HepG2 (cell line): ENCODE measurements at regions of chr17 and their contacts with region 1.

Region 1: DNA sequence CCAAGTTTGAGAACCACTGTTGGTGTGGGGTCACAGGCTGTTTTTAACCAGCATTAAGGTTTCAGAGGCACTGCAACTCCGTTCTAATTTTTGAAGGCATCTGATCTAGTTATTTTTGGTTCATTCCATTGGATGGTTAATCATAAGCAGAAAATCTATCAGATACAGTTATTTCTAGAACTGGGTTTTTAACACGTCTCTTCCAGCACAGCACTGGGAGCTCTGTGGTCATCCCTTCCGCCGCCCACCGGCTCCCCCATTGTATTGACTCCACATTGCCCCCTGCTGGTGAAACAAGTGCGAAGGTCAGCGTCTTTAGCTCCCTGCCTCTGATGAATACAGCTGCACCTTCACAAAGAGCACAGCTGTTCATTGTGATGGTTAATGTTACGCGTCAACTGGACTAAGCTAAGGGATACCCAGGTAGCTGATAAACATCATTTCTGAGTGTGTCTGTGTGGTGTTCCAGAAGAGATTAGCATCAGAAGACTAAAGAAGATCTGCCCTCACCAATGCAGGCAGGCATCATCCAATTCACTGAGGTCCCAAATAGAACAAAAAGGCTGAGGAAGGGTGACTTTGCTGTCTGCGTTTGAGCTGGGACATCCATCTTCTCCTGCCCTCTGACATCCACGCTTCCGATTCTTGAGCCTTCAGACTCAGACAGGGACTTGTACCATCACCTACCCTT is 8.5 kb downstream of the CCL18 start:
- DNase-seq: peak; percentile 52
- ATAC-seq: peak; percentile 77
- H3K4me3 ChIP-seq: no peak overlapping the region
- H3K27ac ChIP-seq: no peak overlapping the region
- H3K4me1 ChIP-seq: no peaks in the 10 kb centered on the region
- H3K27me3 ChIP-seq: peaks cover 0 to 16% of the 10 kb centered on the region in 2 experiments; a peak in 2 of 5 replicates
- CTCF ChIP-seq: peak; percentile 81
- EP300 ChIP-seq: no peak
- POLR2A ChIP-seq: no peak
- RAD21 ChIP-seq: peak; percentile 65; the same call in 1 of the 2 replicates

Region 2: DNA sequence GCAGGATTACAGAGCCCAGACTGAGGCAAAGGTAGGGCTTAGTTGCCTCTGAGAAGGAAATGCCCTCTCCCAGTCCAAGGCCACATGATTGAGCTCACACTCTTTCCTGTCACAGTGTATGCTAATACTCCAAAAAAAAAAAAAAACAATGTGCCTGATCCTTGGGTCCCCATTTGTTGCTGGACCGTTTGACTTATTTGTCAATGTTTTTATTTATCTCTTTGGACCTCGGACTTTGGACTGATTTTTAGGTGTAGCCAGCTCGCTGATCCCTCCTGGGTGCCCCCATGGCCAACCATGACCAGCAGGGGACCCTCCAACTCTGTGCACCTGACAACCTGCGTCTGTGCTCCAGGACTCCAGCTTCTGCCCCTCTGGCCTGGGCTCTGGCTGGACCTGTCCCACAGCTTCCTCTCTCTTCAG is 90.7 kb before region 1 on chr17:
- CTCF ChIA-PET with region 1: interaction called, 3 read pairs
- POLR2A ChIA-PET with region 1: interaction called, 19 read pairs
- in situ Hi-C with region 1: no loop called
- intact Hi-C with region 1: no loop called
- DNase-seq: peak; percentile 75
- ATAC-seq: peak; percentile 86
- H3K4me3 ChIP-seq: peak overlapping the region in 1 of 3 experiments; percentile 65; a peak in 2 of 6 replicates
- H3K27ac ChIP-seq: peak overlapping the region; percentile 66
- H3K4me1 ChIP-seq: peaks cover 78% of the 10 kb centered on the region
- H3K27me3 ChIP-seq: no peaks in the 10 kb centered on the region; a peak in 1 of 5 replicates
- CTCF ChIP-seq: peak; percentile 87
- EP300 ChIP-seq: peak in 1 of 2 experiments; percentile 48; a peak in 1 of 4 replicates
- POLR2A ChIP-seq: no peak
- RAD21 ChIP-seq: peak; percentile 88

Region 3: DNA sequence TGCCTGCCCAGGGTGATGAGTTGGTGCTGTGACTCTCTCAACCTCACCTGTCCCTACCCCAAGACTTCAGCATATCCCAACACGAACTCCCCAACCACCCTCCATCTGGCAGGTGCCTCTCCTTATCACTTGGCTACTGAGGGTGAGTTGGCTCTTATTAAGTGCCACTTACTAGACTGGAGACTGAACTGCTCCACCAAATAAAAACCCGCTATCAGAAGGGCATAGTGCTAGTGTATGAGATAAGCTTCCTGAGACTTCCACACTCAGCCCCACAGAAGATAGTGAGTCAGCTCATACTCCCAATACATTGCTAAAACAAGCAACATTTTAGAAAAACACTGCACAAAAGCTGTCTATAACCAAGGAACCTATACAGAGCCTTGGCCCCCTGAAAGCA is 24.5 kb before region 1 on chr17:
- CTCF ChIA-PET with region 1: no interaction called
- POLR2A ChIA-PET with region 1: no interaction called
- in situ Hi-C with region 1: no loop called
- intact Hi-C with region 1: no loop called
- DNase-seq: no peak
- ATAC-seq: no peak
- H3K4me3 ChIP-seq: no peak overlapping the region
- H3K27ac ChIP-seq: no peak overlapping the region
- H3K4me1 ChIP-seq: no peaks in the 10 kb centered on the region
- H3K27me3 ChIP-seq: no peaks in the 10 kb centered on the region; a peak in 1 of 5 replicates
- CTCF ChIP-seq: no peak
- EP300 ChIP-seq: no peak
- POLR2A ChIP-seq: no peak
- RAD21 ChIP-seq: no peak